ENCODE measurements at regions of chr9 and their contacts with region 1.

Region 1: GRCh38 chr9:71647094-71647591 is 121.2 kb downstream of the CEMIP2 start:
- DNase-seq: peak; percentile 79
- ATAC-seq: peak; percentile 78
- H3K4me3 ChIP-seq: peak overlapping the region; percentile 11; the same call in 1 of the 2 replicates
- H3K27ac ChIP-seq: no peak overlapping the region
- H3K4me1 ChIP-seq: peaks cover 24% of the 10 kb centered on the region
- H3K27me3 ChIP-seq: no peaks in the 10 kb centered on the region
- CTCF ChIP-seq: no peak

Region 2: GRCh38 chr9:71669256-71669975 is 22.3 kb after region 1 on chr9:
- CTCF ChIA-PET with region 1: no interaction called
- POLR2A ChIA-PET with region 1: interaction called, 15 read pairs
- intact Hi-C with region 1: no loop called
- DNase-seq: no peak
- ATAC-seq: no peak
- H3K4me3 ChIP-seq: no peak overlapping the region
- H3K27ac ChIP-seq: no peak overlapping the region
- H3K4me1 ChIP-seq: no peaks in the 10 kb centered on the region
- H3K27me3 ChIP-seq: no peaks in the 10 kb centered on the region
- CTCF ChIP-seq: no peak

Region 3: GRCh38 chr9:71737455-71737854 is 90.3 kb after region 1 on chr9:
- CTCF ChIA-PET with region 1: no interaction called
- POLR2A ChIA-PET with region 1: no interaction called
- intact Hi-C with region 1: no loop called
- DNase-seq: peak; percentile 57
- ATAC-seq: peak; percentile 53
- H3K4me3 ChIP-seq: no peak overlapping the region
- H3K27ac ChIP-seq: no peak overlapping the region
- H3K4me1 ChIP-seq: peaks cover 10% of the 10 kb centered on the region
- H3K27me3 ChIP-seq: no peaks in the 10 kb centered on the region
- CTCF ChIP-seq: no peak